PC-3 (cell line): ENCODE measurements at regions of chr4 and their contacts with region 1.

Region 1: GRCh38 chr4:164012396-164013027 is 518.0 kb downstream of the TMA16 start:
- DNase-seq: peak; percentile 58
- ATAC-seq: peak; percentile 87; the same call in 1 of the 2 replicates
- H3K4me3 ChIP-seq: no peak overlapping the region
- H3K27ac ChIP-seq: no peak overlapping the region
- H3K4me1 ChIP-seq: no peaks in the 10 kb centered on the region
- H3K27me3 ChIP-seq: no peaks in the 10 kb centered on the region
- CTCF ChIP-seq: peak; percentile 71

Region 2: GRCh38 chr4:163554870-163555465 is 457.5 kb before region 1 on chr4:
- CTCF ChIA-PET with region 1: interaction called, 10 read pairs
- POLR2A ChIA-PET with region 1: no interaction called
- intact Hi-C with region 1: loop called (anchors 1 kb)
- DNase-seq: peak; percentile 60
- ATAC-seq: no peak
- H3K4me3 ChIP-seq: no peak overlapping the region
- H3K27ac ChIP-seq: no peak overlapping the region
- H3K4me1 ChIP-seq: peaks cover 7% of the 10 kb centered on the region
- H3K27me3 ChIP-seq: no peaks in the 10 kb centered on the region
- CTCF ChIP-seq: peak; percentile 79

Region 3: DNA sequence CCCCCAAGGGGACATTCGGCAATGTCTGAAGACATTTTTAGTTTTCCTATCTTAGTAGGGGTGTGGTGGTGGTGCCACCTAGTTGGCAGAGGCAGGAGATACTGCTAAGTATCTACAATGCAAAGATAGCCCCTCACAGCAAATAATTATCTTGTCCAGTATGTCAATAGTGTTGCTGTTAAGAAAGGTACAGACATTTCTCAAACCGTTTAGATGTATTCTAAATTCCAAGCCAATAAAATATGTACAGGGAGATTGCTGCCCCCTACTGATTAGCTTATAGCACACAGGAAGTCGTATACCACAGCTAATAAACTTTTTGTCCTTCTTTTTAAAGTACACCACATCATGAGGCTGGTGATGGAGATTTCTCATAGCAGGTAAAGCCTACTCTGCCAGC is 257.5 kb before region 1 on chr4:
- CTCF ChIA-PET with region 1: no interaction called
- POLR2A ChIA-PET with region 1: no interaction called
- intact Hi-C with region 1: loop called (anchors 1 kb)
- DNase-seq: peak; percentile 51
- ATAC-seq: peak; percentile 55
- H3K4me3 ChIP-seq: no peak overlapping the region
- H3K27ac ChIP-seq: no peak overlapping the region
- H3K4me1 ChIP-seq: no peaks in the 10 kb centered on the region
- H3K27me3 ChIP-seq: no peaks in the 10 kb centered on the region
- CTCF ChIP-seq: peak; percentile 67

Region 4: DNA sequence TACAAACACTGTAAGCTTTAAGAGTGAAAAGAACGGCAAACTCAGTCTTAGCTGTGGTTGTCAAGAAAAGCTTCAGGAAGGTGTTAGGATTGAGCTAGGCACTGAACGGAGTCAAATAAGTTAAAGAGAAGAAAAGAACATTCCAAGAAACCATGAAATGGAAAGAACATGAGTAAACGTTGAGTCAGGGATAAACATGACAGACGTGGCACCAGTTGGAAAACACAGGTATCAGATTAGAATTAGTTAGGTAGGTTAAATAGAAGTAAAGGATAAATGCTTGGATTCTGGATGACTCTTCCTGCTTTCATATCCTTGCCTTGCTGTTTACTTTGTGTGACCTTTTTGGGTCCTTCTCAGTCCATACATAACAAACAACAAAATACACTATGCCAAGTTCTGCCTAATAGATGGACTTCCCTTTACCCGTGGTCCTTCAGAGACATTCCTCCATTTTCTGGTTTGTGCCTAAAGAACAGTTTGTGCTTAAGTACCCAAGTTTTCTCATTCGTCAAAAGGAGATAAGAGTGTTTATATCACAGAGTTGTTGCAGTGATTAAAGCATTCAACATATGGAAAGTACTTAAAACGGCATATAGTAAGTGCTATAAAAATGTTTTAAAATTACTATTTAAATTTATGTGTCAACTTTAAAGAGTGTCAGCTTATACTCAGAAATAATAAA is 71.1 kb before region 1 on chr4:
- CTCF ChIA-PET with region 1: no interaction called
- POLR2A ChIA-PET with region 1: no interaction called
- intact Hi-C with region 1: loop called (anchors 5 kb)
- DNase-seq: peak; percentile 77
- ATAC-seq: peak; percentile 86
- H3K4me3 ChIP-seq: no peak overlapping the region; the same call in 1 of the 2 replicates
- H3K27ac ChIP-seq: peak overlapping the region; percentile 70
- H3K4me1 ChIP-seq: peaks cover 20% of the 10 kb centered on the region; the same call in 1 of the 2 replicates
- H3K27me3 ChIP-seq: no peaks in the 10 kb centered on the region
- CTCF ChIP-seq: no peak

Region 5: GRCh38 chr4:164748375-164748774 is 735.9 kb after region 1 on chr4:
- CTCF ChIA-PET with region 1: no interaction called
- POLR2A ChIA-PET with region 1: no interaction called
- intact Hi-C with region 1: loop called (anchors 5 kb)
- DNase-seq: peak; percentile 52
- ATAC-seq: no peak
- H3K4me3 ChIP-seq: no peak overlapping the region
- H3K27ac ChIP-seq: no peak overlapping the region
- H3K4me1 ChIP-seq: peaks cover 4% of the 10 kb centered on the region; the same call in 1 of the 2 replicates
- H3K27me3 ChIP-seq: no peaks in the 10 kb centered on the region
- CTCF ChIP-seq: peak; percentile 54